Activated naive CD4-positive, alpha-beta T cell treated with anti-CD3 and anti-CD28 coated beads for 36 hours (primary cell): ENCODE measurements at regions of chr7 and their contacts with region 1.

Region 1: DNA sequence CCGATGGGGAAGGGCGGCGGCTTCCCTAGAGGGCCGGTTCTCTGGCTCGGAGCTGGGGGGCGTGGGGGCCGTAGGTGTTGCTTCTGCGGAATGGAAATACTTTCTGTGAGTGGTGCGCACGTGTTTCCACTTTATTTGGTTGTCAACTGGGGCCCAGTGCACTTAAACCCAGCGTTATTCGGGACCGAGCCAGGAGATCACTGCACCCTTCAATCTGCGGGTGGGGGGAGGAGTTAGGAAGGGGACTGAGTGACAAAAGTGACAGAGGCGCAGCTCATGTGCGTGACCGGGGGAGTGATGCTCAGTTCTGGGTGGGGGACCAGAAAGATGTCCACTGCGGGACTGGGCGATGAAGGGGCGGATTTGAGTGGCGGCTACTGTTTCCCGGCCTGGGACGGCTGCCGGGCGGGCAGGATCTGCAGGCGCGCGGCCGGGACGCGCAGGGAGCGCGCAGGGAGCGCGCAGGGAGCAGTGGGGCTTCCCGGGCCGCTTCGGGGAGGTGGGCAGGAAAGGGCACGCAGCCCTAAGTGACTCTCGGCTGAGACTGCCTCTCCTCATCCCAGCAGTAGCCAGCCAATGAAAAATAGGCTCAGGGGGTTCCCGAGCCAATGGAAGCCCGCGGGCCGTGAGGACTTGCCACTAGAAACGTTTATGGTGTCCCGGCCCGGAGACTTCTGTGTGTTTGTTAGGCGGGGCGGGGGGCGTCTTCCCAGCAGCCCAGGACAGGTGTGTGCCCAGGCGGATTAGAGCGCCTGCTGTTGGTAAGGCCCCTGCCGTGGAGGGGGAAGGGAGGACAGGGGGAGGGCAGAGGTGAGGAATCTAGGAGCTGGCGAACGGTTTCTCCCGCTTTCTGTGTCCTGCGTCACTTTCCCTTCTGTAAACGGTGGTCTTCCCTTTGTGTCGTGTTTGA is 54.3 kb upstream of the KDM7A start:
- DNase-seq: peak; percentile 85
- H3K4me3 Mint-ChIP-seq: peak overlapping the region; percentile 97
- H3K27ac Mint-ChIP-seq: peak overlapping the region; percentile 98
- H3K4me1 Mint-ChIP-seq: peaks cover 38% of the 10 kb centered on the region
- H3K27me3 Mint-ChIP-seq: no peaks in the 10 kb centered on the region

Region 2: DNA sequence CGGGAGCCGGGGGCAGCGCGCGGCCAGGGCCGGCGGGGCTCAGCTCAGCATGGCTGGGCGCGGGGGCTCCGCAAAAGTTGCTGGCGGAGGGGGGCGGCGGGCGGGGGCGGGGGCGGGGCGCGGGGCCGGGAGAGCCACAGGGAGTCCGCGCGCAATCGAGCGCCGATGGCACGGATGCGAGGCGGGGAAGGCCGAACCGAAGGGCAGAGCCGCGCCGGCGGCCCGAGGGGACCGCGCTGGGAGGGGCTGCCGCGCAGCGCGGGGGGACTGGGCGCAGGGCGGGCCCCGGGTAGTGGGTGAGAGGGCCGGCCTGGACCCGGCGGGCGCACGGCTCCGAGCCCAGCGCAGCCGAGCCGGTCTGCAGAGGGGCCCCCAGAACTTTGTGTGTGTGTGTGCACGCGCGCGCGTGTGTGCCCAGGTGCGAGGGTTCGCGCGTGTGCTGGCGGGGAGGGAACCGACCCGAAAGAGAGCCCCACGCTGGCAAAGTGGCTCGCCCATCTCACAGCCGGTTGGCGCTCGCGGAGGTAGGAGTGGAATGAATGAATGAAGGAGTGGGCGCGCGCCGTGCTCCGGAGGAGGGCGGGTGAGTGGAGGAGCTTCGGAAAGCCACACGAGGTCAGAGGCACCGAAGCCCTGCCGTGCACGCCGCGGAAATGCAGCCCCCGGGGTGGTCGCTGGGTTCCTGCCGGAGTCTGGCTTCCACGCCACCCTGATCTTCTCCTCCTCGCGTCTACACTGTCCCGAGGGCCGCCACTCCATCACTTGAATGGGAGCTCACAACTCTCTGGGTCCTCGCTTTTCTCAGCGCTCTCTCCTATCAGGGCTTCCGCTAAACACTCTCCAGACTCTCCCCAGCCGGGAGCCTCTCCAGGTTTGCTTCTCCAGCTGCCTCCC is 452.9 kb before region 1 on chr7 and contains the start of gene HIPK2:
- CTCF ChIA-PET with region 1: no interaction called
- intact Hi-C with region 1: loop called (anchors 2 kb)
- DNase-seq: peak; percentile 68
- H3K4me3 Mint-ChIP-seq: peak within 1 kb of the TSS; percentile 96
- H3K27ac Mint-ChIP-seq: peak within 1 kb of the TSS; percentile 84
- H3K4me1 Mint-ChIP-seq: peaks cover 36% of the 10 kb centered on the region
- H3K27me3 Mint-ChIP-seq: peaks cover 14% of the 10 kb centered on the region
- total RNA-seq, gene HIPK2: 16.8 to 17.3 TPM

Region 3: GRCh38 chr7:140196361-140197217 is 34.5 kb before region 1 on chr7:
- CTCF ChIA-PET with region 1: no interaction called
- intact Hi-C with region 1: loop called (anchors 1 kb)
- DNase-seq: no peak
- H3K4me3 Mint-ChIP-seq: no peak overlapping the region
- H3K27ac Mint-ChIP-seq: peak overlapping the region; percentile 86
- H3K4me1 Mint-ChIP-seq: peaks cover 35% of the 10 kb centered on the region
- H3K27me3 Mint-ChIP-seq: no peaks in the 10 kb centered on the region

Region 4: DNA sequence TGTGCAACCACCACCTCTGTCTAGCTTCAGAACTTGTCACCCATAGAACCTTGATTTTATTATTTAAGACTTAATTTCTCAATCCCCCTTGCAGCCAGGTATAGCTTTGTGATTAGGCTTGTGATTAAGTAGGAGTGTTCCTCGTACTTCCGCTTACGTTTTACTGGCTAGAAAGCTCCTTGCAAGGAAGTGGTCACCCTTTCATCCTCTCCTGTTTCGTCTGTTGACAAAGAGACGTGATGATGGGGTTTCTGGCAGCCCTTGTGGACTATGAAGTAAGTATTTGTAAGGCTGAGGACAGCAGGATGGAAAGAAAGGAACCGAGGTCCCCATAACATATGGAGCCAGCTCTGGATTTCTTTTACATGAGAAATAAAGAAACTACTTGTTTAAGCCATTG is 32.2 kb after region 1 on chr7:
- CTCF ChIA-PET with region 1: no interaction called
- intact Hi-C with region 1: loop called (anchors 1 kb)
- DNase-seq: peak; percentile 62
- H3K4me3 Mint-ChIP-seq: peak overlapping the region; percentile 26
- H3K27ac Mint-ChIP-seq: peak overlapping the region; percentile 52
- H3K4me1 Mint-ChIP-seq: peaks cover 44% of the 10 kb centered on the region
- H3K27me3 Mint-ChIP-seq: no peaks in the 10 kb centered on the region

Region 5: GRCh38 chr7:140375892-140376730 is 145.0 kb after region 1 on chr7:
- CTCF ChIA-PET with region 1: no interaction called
- intact Hi-C with region 1: loop called (anchors 1 kb)
- DNase-seq: peak; percentile 59
- H3K4me3 Mint-ChIP-seq: peak overlapping the region; percentile 58
- H3K27ac Mint-ChIP-seq: peak overlapping the region; percentile 96
- H3K4me1 Mint-ChIP-seq: peaks cover 37% of the 10 kb centered on the region
- H3K27me3 Mint-ChIP-seq: no peaks in the 10 kb centered on the region

Region 6: DNA sequence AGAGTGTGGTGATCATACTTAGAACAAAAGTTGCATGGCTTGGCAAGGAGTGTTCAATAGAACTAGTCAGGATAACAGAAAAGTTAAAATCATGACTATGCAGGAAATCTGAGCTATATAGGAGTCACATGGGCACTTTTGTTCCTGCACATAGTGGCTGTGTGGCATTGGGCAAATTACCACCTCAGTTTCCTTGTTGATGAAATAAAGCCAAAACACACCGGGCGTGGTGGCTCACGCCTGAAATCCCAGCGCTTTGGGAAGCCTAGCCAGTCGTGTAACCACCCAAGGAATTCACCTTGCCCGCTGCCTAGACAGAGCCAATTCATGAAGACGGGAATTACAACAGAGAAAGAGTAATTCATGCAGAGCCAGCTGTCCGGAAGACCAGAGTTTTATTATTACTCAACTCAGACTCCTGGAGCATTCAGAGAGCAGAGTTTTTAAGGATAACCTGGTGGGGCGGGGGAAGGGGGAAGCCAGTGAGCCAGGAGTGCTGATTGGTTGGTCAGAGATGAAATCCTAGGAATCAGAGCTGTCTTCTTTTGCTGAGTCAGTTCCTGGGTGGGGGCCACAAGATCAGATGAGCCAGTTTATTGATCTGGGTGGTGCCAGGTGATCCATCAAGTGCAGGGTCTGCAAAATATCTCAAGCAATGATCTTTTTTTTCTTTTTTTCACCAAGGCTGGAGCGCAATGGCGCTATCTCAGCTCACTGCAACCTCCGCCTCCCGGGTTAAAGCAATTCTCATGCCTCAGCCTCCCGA is 254.6 kb after region 1 on chr7:
- CTCF ChIA-PET with region 1: no interaction called
- intact Hi-C with region 1: no loop called
- DNase-seq: no peak
- H3K4me3 Mint-ChIP-seq: no peak overlapping the region
- H3K27ac Mint-ChIP-seq: no peak overlapping the region
- H3K4me1 Mint-ChIP-seq: no peaks in the 10 kb centered on the region
- H3K27me3 Mint-ChIP-seq: no peaks in the 10 kb centered on the region